ENCODE measurements at regions of chr1 and their contacts with region 1.

Region 1: DNA sequence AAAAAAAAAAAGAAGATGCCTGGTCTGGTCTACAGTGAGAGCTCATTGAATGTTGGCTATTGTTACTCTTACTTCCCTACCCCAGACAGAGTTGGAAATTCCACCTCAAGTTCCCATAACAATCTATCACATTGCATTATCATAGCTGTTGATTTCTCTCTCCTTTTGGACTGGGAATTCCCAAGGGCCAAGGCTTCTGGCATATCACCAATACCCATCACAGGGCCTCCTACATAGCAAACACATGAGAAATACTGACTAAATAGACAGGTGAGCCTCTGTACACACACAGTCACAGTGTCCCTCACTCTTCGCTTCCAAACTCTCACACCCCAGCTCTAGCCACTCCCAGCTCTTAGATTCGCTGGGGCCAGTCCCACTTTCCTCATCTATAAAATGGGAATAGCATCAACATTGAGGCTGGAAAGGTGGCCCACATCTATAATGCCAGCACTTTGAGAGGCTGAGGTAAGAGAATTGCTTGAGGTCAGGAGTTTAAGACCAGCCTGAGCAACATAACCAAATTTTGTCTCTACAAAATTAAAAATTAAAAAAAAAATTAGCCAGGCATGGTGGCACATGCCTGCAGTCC is 6.4 kb downstream of the PTAFR start:
- DNase-seq: no peak
- ATAC-seq: no peak
- H3K4me3 Mint-ChIP-seq: no peak overlapping the region
- H3K27ac Mint-ChIP-seq: no peak overlapping the region
- H3K4me1 Mint-ChIP-seq: peaks cover 50% of the 10 kb centered on the region
- H3K27me3 Mint-ChIP-seq: peaks cover 57% of the 10 kb centered on the region

Region 2: GRCh38 chr1:27884006-27884954 is 285.8 kb before region 1 on chr1:
- CTCF ChIA-PET with region 1: no interaction called
- DNase-seq: no peak
- ATAC-seq: no peak
- H3K4me3 Mint-ChIP-seq: no peak overlapping the region
- H3K27ac Mint-ChIP-seq: peak overlapping the region; percentile 36
- H3K4me1 Mint-ChIP-seq: peaks cover 45% of the 10 kb centered on the region
- H3K27me3 Mint-ChIP-seq: no peaks in the 10 kb centered on the region

Region 3: DNA sequence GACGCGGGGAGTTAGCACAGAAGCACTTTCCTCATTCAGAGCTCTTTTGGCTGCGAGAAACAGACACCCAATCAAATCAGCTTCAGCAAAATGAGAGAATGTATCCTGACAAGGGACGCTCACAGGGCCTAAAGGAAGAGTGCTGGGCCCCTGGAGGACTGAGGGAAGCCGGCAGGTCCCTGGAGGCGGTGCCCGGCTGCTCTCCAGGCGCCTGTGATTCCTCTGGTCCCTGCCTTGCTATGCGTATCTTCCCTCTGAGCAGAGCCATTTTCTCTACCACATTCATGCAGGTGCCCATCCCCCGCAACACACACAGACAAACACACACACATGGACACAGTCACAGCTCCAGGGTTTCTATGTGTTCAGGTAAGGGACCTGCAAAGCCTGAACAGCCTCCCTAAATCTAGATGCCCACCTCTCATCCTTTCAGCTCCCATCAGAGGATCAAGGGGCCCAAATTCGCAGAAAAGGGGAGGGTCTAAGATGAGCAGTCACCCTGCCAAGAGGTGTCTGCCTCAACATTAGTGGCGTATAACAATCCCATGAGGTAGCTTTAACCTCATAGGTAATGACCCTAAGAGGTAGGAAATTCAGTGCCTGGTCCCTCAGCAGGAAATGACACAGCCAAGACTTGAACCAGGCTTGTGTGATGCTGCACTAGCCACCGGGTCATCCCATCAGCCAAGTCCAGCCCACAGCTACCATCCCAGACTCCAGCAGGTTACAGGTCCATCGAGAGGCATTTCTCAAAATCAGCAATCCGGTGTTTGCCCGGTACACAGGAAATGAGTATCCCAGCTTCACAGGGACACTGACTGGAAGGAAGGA is 22.6 kb before region 1 on chr1:
- CTCF ChIA-PET with region 1: no interaction called
- DNase-seq: no peak
- ATAC-seq: no peak
- H3K4me3 Mint-ChIP-seq: no peak overlapping the region
- H3K27ac Mint-ChIP-seq: no peak overlapping the region
- H3K4me1 Mint-ChIP-seq: peaks cover 18% of the 10 kb centered on the region
- H3K27me3 Mint-ChIP-seq: peaks cover 65% of the 10 kb centered on the region

Region 4: GRCh38 chr1:28208818-28209441 is 38.8 kb after region 1 on chr1:
- CTCF ChIA-PET with region 1: interaction called, 10 read pairs
- DNase-seq: peak; percentile 84
- ATAC-seq: peak; percentile 93
- H3K4me3 Mint-ChIP-seq: no peak overlapping the region
- H3K27ac Mint-ChIP-seq: no peak overlapping the region
- H3K4me1 Mint-ChIP-seq: peaks cover 8% of the 10 kb centered on the region
- H3K27me3 Mint-ChIP-seq: no peaks in the 10 kb centered on the region